Spleen (tissue), 13 donors: ENCODE measurements at regions of chr9 and their contacts with region 1.

Region 1: DNA sequence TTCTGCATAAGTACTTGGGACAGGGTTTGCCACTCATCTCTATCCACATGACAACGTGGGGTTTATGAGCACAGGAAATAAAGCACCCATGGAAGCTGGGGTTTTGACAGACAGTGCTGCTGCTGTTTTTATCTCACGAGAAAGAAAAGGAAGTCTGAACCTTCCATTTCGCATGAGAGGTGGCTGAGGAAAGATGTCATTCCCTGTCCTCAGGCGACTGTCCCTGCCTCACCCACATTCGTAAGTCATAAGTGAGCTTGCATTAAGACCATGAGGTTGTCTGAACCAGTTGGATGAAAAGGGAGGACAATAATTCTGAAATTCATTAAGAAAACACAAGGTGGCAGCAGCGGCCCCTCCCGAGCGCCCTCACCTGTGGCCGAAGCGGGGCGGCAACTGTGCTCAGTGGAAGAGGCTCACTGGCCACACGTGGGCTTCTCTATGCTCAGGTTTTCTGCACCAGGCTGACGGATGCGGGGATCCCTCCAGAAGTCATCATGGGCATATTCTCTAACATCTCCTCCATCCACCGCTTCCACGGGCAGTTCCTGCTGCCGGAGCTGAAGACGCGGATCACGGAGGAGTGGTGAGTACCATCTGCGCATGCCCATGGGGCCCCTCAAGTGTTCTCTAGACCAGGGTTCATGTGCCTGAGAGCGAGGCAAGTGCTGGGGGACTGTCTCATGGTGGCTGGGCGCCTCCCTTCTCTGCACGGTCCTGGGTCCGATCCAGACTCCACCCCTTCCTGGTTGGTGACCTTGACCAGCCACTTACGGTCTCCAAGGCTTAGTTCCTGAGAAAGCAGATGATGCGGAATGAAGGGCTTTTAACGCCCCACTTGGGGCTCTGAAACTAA is 54.7 kb upstream of the SUSD3 start:
- DNase-seq: peak; percentile 89
- H3K4me3 ChIP-seq: peak overlapping the region in 7 of 8 donors; percentile 3 to 64 (median 30)
- H3K27ac ChIP-seq: peak overlapping the region in 6 of 8 donors; percentile 12 to 63 (median 46)
- H3K4me1 ChIP-seq: peaks cover 0 to 47% (median 20%) of the 10 kb centered on the region in 6 donors
- H3K27me3 ChIP-seq: no peaks in the 10 kb centered on the region
- CTCF ChIP-seq: peak in 10 of 11 experiments; percentile 28 to 75 (median 70)
- POLR2A ChIP-seq: no peak

Region 2: GRCh38 chr9:92293452-92294296 is 710.1 kb before region 1 on chr9 and contains the start of gene IARS1:
- intact Hi-C with region 1: no loop called
- DNase-seq: peak; percentile 98
- H3K4me3 ChIP-seq: peak within 1 kb of the TSS; percentile 61 to 85 (median 76)
- H3K27ac ChIP-seq: peak within 1 kb of the TSS; percentile 66 to 91 (median 86)
- H3K4me1 ChIP-seq: peaks cover 21 to 74% (median 37%) of the 10 kb centered on the region in 6 donors
- H3K27me3 ChIP-seq: no peaks in the 10 kb centered on the region
- CTCF ChIP-seq: peak in 6 of 11 experiments; percentile 30 to 59 (median 38)
- POLR2A ChIP-seq: peak in 1 of 3 donors; percentile 80
- total RNA-seq, gene IARS1: 58.3 to 110 (median 71.5) TPM

Region 3: GRCh38 chr9:92680166-92681119 is 323.3 kb before region 1 on chr9:
- intact Hi-C with region 1: no loop called
- DNase-seq: no peak
- H3K4me3 ChIP-seq: no peak overlapping the region
- H3K27ac ChIP-seq: peak overlapping the region in 2 of 8 donors; percentile 65 to 69
- H3K4me1 ChIP-seq: peaks cover 0 to 11% (median 4%) of the 10 kb centered on the region in 6 donors
- H3K27me3 ChIP-seq: no peaks in the 10 kb centered on the region
- CTCF ChIP-seq: no peak
- POLR2A ChIP-seq: no peak

Region 4: DNA sequence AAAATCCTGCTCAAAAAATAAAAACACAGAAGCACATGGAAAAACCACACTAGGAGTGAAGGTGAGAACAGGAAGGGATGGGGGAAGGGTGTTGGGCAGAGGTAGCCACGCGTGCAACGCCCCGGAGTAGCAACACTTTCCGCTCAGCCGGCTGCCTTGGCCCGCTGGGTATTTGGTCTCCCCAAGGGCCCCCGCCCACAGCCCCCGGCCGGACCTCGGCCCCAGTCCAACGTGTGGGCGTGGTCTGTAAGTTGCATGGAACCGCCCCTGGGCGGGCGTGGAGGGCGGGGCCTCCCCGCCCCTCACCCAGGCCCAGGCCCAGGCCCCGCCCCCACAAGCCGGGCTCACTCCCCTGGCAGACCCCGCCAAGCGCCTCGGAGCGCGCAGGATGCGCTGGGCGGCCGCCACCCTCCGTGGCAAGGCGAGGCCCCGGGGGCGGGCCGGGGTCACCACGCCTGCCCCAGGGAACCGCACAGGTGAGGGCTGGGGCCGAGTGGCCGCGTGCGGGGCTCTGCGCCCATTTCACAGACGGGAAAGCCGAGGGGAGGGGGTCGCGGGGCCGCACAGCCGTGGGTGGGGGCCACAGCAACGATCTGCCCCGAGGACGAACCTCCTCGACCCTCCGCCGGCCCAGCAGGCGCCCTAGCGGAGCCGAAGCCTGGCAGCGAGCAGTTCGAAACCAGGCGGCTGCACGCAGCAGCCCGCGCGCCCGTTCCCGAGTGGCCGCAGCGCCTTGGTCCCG is 54.7 kb after region 1 on chr9 and contains the start of gene SUSD3:
- intact Hi-C with region 1: loop called (anchors 10 kb)
- DNase-seq: peak; percentile 95
- H3K4me3 ChIP-seq: peak within 1 kb of the TSS; percentile 40 to 88 (median 60)
- H3K27ac ChIP-seq: peak within 1 kb of the TSS; percentile 85 to 98 (median 93)
- H3K4me1 ChIP-seq: peaks cover 39 to 96% (median 68%) of the 10 kb centered on the region in 6 donors
- H3K27me3 ChIP-seq: no peaks in the 10 kb centered on the region
- CTCF ChIP-seq: no peak
- POLR2A ChIP-seq: no peak
- total RNA-seq, gene SUSD3: 27.6 to 54.8 (median 35.8) TPM

Region 5: DNA sequence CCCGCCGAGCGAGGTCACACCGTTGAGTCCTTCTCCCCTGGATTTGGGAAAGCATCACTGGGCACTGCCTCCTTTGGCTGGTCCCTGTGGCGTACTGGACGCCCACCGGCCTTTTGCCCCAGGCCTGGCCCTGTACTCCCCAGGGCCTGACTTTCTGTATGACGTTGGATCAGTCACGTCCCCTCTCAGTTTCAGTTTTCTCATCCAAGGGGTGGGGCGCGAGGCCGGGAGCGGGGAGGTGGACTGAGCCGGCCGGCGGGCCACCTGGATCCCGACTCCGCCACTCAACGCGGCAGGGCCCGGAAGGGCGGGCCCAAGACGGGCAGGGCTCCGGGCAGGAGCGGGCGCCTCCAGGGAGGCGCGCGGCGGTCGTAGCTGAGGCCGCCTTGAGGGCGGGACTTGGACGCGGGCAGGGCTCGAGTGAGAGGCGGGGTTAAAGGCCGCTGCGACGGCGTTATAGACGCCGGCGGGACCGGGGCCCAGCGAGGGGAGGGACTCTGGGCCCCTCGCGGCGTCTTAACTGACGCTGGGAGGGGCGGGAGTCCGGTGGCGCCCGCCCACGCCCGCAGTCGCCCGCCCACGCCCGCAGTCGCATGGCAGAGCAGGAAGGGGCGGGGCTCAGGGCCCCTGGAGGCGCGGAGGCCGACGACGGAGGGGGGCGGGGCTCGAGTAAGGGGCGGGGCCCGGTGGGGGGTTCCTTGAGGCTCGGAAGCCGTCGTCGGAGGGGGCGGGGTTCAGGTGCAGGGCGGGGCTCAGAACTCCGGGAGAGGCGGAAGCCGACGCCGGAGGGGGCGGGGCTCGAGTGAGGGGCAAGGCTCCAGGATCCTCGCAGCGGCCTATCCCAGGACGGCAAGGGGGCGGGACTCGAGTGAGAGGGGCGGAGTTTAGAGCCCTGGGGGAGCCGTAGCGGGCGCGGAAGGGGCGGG is 91.7 kb after region 1 on chr9:
- intact Hi-C with region 1: loop called (anchors 10 kb)
- DNase-seq: peak; percentile 100
- H3K4me3 ChIP-seq: peak overlapping the region; percentile 14 to 99 (median 94)
- H3K27ac ChIP-seq: peak overlapping the region; percentile 95 to 100 (median 98)
- H3K4me1 ChIP-seq: peaks cover 62 to 86% (median 76%) of the 10 kb centered on the region in 6 donors
- H3K27me3 ChIP-seq: no peaks in the 10 kb centered on the region
- CTCF ChIP-seq: peak in 2 of 11 experiments; percentile 27 to 38
- POLR2A ChIP-seq: peak in 2 of 3 donors; percentile 50 to 72